ENCODE measurements at regions of chr6 and their contacts with region 1.

Region 1: DNA sequence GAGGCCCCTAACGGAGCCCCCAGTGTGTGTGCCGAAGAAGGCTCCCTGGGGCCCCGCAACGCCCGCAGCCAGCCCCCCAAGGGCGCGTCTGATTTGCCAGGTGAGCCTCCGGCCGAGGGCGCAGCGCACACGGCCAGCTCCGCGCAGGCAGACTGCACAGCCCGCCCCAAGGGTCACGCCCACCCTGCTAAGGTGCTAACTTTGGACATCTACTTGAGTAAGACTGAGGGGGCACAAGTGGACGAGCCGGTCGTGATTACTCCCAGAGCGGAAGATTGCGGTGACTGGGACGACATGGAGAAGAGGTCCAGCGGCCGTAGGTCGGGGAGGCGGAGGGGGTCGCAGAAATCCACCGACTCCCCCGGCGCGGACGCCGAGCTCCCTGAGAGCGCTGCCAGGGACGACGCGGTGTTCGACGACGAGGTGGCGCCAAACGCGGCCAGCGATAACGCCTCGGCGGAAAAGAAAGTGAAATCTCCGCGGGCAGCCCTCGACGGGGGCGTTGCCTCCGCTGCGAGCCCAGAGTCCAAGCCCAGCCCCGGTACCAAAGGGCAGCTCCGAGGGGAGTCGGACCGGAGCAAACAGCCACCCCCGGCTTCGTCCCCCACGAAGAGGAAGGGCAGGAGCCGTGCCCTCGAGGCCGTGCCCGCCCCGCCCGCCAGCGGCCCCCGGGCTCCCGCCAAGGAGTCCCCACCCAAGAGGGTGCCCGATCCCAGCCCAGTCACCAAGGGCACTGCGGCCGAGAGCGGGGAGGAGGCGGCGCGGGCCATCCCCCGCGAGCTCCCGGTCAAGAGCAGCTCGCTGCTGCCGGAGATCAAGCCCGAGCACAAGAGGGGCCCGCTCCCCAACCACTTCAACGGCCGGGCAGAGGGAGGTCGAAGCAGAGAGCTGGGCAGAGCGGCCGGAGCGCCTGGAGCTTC is 117.0 kb downstream of the RTN4IP1 start:
- DNase-seq: peak; percentile 75
- H3K4me3 Mint-ChIP-seq: peak overlapping the region; percentile 95
- H3K27ac Mint-ChIP-seq: peak overlapping the region; percentile 96
- H3K4me1 Mint-ChIP-seq: peaks cover 41% of the 10 kb centered on the region
- H3K27me3 Mint-ChIP-seq: no peaks in the 10 kb centered on the region
- CTCF ChIP-seq: no peak

Region 2: DNA sequence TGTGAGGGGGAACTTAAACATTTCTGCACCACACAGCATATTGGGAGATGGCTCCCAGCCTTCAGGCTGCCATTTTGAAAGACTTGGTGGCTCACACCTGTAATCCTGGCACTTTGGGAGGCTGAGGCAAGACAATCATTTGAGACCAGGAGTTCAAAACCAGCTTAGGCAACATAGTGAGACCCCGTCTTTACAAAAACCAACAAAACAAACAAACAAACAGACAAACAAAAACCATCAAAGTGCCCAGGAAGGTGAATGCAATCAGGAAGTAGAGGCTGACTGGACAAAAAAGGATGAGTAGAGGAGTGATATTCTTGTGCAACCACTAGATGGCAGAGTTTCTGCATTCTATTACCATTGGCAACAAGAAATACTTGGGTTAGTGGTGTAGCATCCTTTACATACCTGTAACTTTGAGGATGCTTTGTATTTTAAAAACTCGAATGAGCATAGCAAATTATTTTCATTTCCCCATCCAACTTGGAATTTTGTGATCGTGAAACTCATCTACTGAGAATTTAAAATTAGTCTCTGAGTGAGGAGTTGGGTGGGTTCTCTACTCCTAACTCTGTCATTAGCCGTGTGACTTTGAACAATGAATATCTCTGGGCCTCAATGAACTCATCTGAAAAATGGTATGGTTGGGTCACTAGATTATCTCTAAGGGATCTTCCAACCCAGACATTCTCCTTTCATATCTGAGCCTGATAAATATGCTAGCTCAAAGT is 67.4 kb before region 1 on chr6:
- CTCF ChIA-PET with region 1: interaction called, 6 read pairs
- POLR2A ChIA-PET with region 1: interaction called, 93 read pairs
- intact Hi-C with region 1: loop called (anchors 1 kb)
- DNase-seq: peak; percentile 79
- H3K4me3 Mint-ChIP-seq: no peak overlapping the region
- H3K27ac Mint-ChIP-seq: no peak overlapping the region
- H3K4me1 Mint-ChIP-seq: peaks cover 6% of the 10 kb centered on the region
- H3K27me3 Mint-ChIP-seq: no peaks in the 10 kb centered on the region
- CTCF ChIP-seq: peak; percentile 65

Region 3: DNA sequence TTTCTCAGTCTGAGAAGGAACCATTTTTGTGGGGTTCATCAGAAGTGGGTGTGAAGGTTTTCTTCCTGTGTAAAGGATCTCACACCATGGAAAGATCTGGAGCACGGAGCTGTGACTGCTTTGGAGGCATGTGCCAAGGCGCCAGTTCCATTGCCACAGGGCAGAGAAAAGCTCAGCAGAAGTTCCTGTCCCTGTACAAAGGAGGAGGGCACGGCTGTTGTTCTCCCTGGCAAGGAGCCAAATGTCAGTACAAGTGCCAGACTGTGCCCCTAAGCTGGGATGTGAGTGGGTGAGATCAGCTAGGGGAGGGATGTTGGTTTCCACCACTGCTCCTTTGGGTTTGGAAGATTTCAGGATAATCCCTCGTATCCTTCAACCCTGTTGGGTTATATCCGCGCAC is 34.5 kb before region 1 on chr6:
- CTCF ChIA-PET with region 1: no interaction called
- POLR2A ChIA-PET with region 1: interaction called, 191 read pairs
- intact Hi-C with region 1: no loop called
- DNase-seq: peak; percentile 66
- H3K4me3 Mint-ChIP-seq: no peak overlapping the region
- H3K27ac Mint-ChIP-seq: no peak overlapping the region
- H3K4me1 Mint-ChIP-seq: peaks cover 13% of the 10 kb centered on the region
- H3K27me3 Mint-ChIP-seq: no peaks in the 10 kb centered on the region
- CTCF ChIP-seq: no peak

Region 4: DNA sequence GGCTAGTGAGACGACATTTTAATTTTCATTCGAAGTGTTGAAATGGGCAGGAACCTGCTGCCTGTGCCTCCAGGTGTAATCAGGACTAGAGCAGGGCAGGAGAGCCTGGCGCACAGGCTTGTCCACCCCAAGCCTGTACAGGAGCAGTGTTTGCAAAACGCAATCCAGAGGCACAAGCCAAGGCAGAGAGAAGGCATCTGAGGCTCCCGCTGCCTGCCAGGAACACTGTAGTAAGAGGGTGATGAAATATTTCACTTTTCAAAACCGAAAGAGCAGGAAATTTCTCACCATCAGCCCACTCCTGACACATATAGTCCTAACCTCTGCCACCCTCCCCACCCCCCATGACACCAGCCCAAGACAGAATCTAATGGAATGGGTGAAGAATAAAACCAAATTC is 15.5 kb before region 1 on chr6:
- CTCF ChIA-PET with region 1: interaction called, 6 read pairs
- POLR2A ChIA-PET with region 1: interaction called, 89 read pairs
- intact Hi-C with region 1: no loop called
- DNase-seq: peak; percentile 94
- H3K4me3 Mint-ChIP-seq: peak overlapping the region; percentile 61
- H3K27ac Mint-ChIP-seq: peak overlapping the region; percentile 93
- H3K4me1 Mint-ChIP-seq: peaks cover 38% of the 10 kb centered on the region
- H3K27me3 Mint-ChIP-seq: no peaks in the 10 kb centered on the region
- CTCF ChIP-seq: no peak

Region 5: GRCh38 chr6:106525111-106525881 is 13.0 kb after region 1 on chr6:
- CTCF ChIA-PET with region 1: interaction called, 18 read pairs
- POLR2A ChIA-PET with region 1: interaction called, 208 read pairs
- intact Hi-C with region 1: no loop called
- DNase-seq: peak; percentile 49
- H3K4me3 Mint-ChIP-seq: peak overlapping the region; percentile 69
- H3K27ac Mint-ChIP-seq: peak overlapping the region; percentile 96
- H3K4me1 Mint-ChIP-seq: peaks cover 43% of the 10 kb centered on the region
- H3K27me3 Mint-ChIP-seq: no peaks in the 10 kb centered on the region
- CTCF ChIP-seq: no peak

Region 6: DNA sequence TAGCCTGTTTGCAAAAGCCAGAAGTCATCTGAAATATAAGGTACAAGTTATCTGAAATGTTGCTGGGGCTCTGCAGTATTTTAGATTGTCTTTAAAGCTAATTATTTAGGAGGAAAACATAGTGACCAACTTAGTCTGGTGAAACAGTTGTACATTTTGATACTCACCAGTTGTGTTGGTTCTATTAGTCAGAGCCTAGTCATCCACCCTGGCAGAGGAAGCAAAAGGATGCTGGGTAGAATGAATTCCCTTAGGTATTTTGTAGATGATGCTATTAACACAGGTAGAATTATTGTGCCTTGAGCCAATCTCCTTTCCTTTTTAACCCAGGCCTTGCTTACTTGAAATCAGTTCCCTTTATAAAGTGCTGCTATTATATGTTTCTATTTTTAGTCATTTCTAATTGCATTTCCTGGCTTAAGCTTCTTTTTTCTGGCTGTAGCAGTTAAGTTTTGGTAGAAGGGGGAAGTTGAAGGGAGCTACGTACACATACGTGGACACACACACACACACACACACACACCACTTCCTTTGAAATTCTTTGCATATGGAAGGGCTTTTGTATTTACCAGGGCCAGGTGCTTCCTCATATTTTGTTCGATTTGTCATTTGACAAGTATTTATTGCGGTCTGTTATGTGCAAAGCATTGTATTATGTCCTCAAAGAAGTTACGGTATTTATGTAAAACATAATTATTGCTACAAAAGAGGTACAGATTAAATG is 34.5 kb after region 1 on chr6:
- CTCF ChIA-PET with region 1: interaction called, 4 read pairs
- POLR2A ChIA-PET with region 1: interaction called, 80 read pairs
- intact Hi-C with region 1: no loop called
- DNase-seq: peak; percentile 88
- H3K4me3 Mint-ChIP-seq: no peak overlapping the region
- H3K27ac Mint-ChIP-seq: peak overlapping the region; percentile 88
- H3K4me1 Mint-ChIP-seq: peaks cover 23% of the 10 kb centered on the region
- H3K27me3 Mint-ChIP-seq: no peaks in the 10 kb centered on the region
- CTCF ChIP-seq: no peak

Region 7: DNA sequence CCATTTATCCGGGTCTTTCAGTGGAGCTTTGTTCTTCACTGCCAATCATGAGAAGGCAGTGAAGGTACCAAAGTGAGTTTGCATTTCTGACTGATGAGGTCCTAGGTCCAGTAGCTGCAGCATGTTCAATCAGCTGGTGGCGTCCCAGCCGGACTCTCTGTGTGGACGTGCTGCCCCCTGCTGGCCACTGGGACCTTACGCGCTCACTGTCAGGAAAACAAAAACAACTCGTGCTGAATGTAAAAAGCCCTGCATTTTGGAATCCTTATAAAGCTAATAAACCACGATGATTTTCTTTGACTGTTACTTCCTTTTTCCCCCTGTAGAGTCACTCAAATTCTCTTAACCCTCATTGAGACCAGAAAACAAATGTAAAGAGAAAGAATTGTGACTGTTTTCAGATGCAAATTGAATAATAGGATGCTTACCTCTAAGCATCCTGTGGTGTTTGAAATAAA is 467.1 kb after region 1 on chr6:
- CTCF ChIA-PET with region 1: interaction called, 6 read pairs
- POLR2A ChIA-PET with region 1: interaction called, 4 read pairs
- intact Hi-C with region 1: loop called (anchors 1 kb)
- DNase-seq: peak; percentile 85
- H3K4me3 Mint-ChIP-seq: no peak overlapping the region
- H3K27ac Mint-ChIP-seq: no peak overlapping the region
- H3K4me1 Mint-ChIP-seq: peaks cover 5% of the 10 kb centered on the region
- H3K27me3 Mint-ChIP-seq: no peaks in the 10 kb centered on the region
- CTCF ChIP-seq: peak; percentile 90